SK-N-SH (cell line): ENCODE measurements at regions of chr6 and their contacts with region 1.

Region 1: DNA sequence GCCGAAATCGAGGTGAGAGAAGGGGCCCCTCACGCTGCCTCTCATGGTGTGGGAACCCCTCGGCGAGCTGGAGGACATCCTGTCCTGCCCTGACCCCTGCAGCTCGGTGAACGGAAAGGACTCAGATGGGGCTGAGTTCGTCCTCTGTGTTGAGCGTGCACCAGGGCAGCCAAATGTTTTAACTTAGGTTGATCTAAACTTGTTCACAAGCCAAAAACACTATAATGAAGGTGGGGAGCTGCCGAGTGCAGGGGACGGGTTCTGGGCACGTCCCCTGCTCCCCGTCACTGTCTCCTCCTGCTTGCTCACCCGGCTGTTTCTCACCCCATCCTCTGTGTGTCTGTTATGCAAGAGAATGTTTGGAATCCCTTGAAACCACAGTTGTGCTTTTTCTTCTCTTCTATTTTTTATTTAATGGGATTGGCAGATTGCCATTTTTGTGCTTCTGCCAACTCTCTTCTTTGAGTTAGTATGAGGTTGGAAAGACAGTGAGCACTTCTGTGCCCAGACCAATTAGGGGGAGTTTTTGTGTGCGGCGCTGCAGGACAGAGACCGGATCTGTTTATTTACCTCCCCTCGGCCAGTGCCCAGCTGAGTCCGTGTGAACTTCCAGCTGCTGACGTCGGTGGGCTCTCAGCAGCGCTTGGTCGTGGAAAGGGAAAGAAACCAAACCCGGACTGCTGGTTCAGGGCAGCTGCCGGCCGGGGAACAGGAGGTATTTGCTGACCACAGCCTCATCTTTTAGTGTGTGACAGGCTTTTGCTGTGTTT is 158.1 kb downstream of the DTNBP1 start:
- DNase-seq: peak; percentile 87
- H3K4me3 ChIP-seq: peak overlapping the region; percentile 35 to 49
- H3K27ac ChIP-seq: peak overlapping the region; percentile 78 to 89
- H3K4me1 ChIP-seq: peaks cover 25 to 33% of the 10 kb centered on the region in 2 experiments
- H3K27me3 ChIP-seq: no peaks in the 10 kb centered on the region
- CTCF ChIP-seq: no peak
- EP300 ChIP-seq: peak; percentile 37 to 89; a peak in 2 of 4 replicates
- RAD21 ChIP-seq: peak; percentile 51

Region 2: DNA sequence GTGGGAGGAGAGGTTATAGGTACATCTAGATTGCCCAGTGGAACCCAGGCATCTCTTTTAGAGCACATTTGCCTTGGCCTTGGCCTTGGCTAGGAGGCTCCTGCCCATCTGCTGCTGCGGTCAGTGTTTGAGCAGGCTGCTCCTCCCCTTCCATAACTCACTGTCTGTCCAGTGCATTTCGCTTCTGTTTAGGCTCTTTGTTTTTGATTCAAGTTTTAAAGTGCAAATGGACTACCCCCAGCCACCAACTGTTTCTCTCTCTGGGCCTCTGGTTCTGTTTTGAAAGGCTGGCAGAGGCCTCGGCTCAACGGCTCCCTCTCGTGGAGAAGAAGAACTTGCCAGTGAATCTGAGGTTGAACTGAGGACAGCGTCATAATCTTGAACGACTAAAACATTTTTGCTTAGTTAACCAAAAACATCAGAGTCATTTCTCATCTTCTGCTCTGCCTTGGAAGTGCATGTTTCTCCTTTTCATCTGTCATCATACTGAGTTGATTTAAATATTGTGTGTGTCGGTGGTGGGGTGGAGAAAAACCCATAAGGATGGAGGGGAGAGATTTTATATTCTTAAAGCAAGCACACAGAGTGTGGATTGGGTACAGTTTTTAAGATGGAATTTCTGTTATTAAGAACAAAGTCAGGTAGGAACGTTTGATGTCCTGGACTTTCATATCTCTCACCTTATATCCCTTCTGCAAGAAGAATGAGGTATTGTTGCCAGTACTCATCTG is 13.3 kb before region 1 on chr6:
- CTCF ChIA-PET with region 1: interaction called, 15 read pairs
- POLR2A ChIA-PET with region 1: no interaction called
- DNase-seq: peak; percentile 70
- H3K4me3 ChIP-seq: no peak overlapping the region; a peak in 1 of 4 replicates
- H3K27ac ChIP-seq: no peak overlapping the region
- H3K4me1 ChIP-seq: peaks cover 3 to 19% of the 10 kb centered on the region in 2 experiments; a peak in 2 of 4 replicates
- H3K27me3 ChIP-seq: no peaks in the 10 kb centered on the region
- CTCF ChIP-seq: peak; percentile 95
- EP300 ChIP-seq: no peak
- RAD21 ChIP-seq: peak; percentile 85

Region 3: GRCh38 chr6:15588971-15589634 is 84.3 kb after region 1 on chr6:
- CTCF ChIA-PET with region 1: no interaction called
- POLR2A ChIA-PET with region 1: no interaction called
- DNase-seq: no peak
- H3K4me3 ChIP-seq: no peak overlapping the region
- H3K27ac ChIP-seq: no peak overlapping the region
- H3K4me1 ChIP-seq: no peaks in the 10 kb centered on the region; a peak in 2 of 4 replicates
- H3K27me3 ChIP-seq: no peaks in the 10 kb centered on the region
- CTCF ChIP-seq: no peak
- EP300 ChIP-seq: no peak
- RAD21 ChIP-seq: no peak